ENCODE measurements at regions of chr17 and their contacts with region 1.

Region 1: DNA sequence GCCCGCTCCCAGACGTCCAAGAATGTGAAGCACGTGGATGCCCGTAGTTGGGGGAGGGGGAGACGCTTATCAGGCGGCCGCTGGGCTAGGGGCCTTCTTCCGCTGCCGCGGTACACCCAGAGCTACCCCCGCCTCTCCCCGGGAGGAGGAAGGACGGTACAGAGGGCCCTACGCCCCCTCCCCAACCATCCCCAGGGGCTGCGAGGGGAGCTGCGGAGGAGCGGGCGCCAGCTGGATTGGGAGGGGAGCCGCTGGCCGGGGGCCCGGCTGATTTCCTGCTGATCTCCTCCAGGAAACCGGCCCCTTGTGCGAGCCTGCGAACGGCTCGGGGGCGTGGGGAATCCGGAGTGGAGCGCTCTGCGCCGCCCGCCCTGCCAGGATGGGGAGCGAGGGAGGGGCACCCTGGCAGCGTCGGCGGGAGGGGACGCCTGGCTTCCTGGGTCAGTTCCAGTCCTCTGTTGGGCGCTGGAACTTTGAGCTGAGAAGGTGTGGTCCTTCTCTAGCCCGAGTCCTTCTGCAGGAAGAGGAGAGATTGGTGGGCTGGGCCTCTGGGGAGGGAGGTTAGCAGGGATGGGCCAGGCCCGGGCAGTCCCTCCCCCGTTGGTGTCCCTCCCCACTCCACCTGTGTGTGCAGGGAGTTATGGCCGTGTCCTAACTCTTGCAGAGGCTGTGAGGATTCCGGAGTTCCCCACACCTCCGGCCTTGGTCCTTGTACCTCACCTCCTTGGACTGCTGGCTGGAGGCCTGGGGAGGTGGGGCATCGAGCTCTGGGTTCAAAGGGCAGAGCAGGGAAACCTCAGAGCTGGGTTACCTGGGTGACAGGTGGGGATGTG is 19.2 kb downstream of the GJD3 start:
- DNase-seq: peak; percentile 89 to 95 (median 95)
- ATAC-seq: peak; percentile 38 to 46
- H3K4me3 ChIP-seq: peak overlapping the region; percentile 89
- H3K27ac ChIP-seq: peak overlapping the region; percentile 89
- H3K4me1 ChIP-seq: peaks cover 40% of the 10 kb centered on the region
- H3K27me3 ChIP-seq: no peaks in the 10 kb centered on the region

Region 2: GRCh38 chr17:39903158-39903884 is 442.1 kb before region 1 on chr17:
- intact Hi-C with region 1: no loop called
- DNase-seq: no peak
- ATAC-seq: no peak
- H3K4me3 ChIP-seq: no peak overlapping the region
- H3K27ac ChIP-seq: no peak overlapping the region
- H3K4me1 ChIP-seq: no peaks in the 10 kb centered on the region
- H3K27me3 ChIP-seq: no peaks in the 10 kb centered on the region

Region 3: GRCh38 chr17:40314584-40314955 is 30.8 kb before region 1 on chr17:
- intact Hi-C with region 1: loop called in 1 of 4 experiments (anchors 5 kb)
- DNase-seq: peak; percentile 89 to 91 (median 89)
- ATAC-seq: peak in 1 of 2 donors; percentile 3
- H3K4me3 ChIP-seq: no peak overlapping the region
- H3K27ac ChIP-seq: peak overlapping the region; percentile 59
- H3K4me1 ChIP-seq: peaks cover 46% of the 10 kb centered on the region
- H3K27me3 ChIP-seq: no peaks in the 10 kb centered on the region

Region 4: GRCh38 chr17:40331743-40332641 is 13.4 kb before region 1 on chr17:
- intact Hi-C with region 1: no loop called
- DNase-seq: peak; percentile 94 to 98 (median 98)
- ATAC-seq: peak; percentile 92 to 94
- H3K4me3 ChIP-seq: no peak overlapping the region
- H3K27ac ChIP-seq: peak overlapping the region; percentile 61
- H3K4me1 ChIP-seq: peaks cover 54% of the 10 kb centered on the region
- H3K27me3 ChIP-seq: no peaks in the 10 kb centered on the region

Region 5: DNA sequence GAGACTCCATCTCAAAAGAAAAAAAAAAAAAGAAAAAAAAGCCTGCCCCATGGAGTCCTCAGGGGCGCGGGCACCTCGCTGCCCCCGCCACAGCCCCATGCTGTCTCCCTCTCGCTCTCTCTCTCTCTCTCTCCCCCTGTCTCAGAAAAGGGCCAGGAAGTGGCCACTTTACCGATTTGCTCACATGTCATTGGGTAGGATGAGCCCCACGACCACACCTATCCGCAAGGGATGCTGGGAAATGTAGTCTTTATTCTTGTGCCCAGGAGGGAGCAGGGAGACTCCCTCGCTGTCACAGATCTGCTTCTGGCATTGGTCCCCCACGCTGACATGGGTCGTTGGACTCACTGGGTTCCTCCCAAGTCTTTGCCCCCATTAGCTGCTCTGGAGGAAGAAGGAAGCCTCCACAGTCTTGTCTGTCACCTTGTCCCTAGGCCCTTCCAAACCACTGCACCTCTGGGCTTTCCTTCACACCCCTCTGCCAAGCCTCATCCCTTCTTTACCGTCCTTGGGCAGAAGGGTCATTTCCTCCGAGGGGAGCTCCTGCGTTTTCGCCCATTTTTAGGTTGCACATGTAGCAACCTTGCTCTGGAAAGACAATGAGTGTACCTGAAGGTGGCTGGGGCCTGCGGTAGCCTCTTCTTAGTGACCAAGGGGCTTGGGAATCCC is 26.0 kb after region 1 on chr17:
- intact Hi-C with region 1: no loop called
- DNase-seq: peak in 1 of 3 donors; percentile 11
- ATAC-seq: peak in 1 of 2 donors; percentile 36
- H3K4me3 ChIP-seq: no peak overlapping the region
- H3K27ac ChIP-seq: no peak overlapping the region
- H3K4me1 ChIP-seq: no peaks in the 10 kb centered on the region
- H3K27me3 ChIP-seq: no peaks in the 10 kb centered on the region

Region 6: GRCh38 chr17:40457964-40458791 is 112.8 kb after region 1 on chr17:
- intact Hi-C with region 1: no loop called
- DNase-seq: peak; percentile 58 to 84 (median 81)
- ATAC-seq: peak; percentile 1 to 10
- H3K4me3 ChIP-seq: no peak overlapping the region
- H3K27ac ChIP-seq: peak overlapping the region; percentile 10
- H3K4me1 ChIP-seq: peaks cover 16% of the 10 kb centered on the region
- H3K27me3 ChIP-seq: no peaks in the 10 kb centered on the region